T-cell (primary cell): ENCODE measurements at regions of chr2 and their contacts with region 1.

Region 1: GRCh38 chr2:177392373-177393202 is at the start of gene AGPS:
- DNase-seq: peak; percentile 45 to 82 (median 65)
- ATAC-seq: peak; percentile 93 to 97 (median 94)
- H3K4me3 ChIP-seq: peak within 1 kb of the TSS; percentile 59 to 94
- H3K4me3 Mint-ChIP-seq: peak within 1 kb of the TSS; percentile 84 to 94 (median 91)
- H3K27ac ChIP-seq: peak within 1 kb of the TSS; percentile 40
- H3K27ac Mint-ChIP-seq: peak within 1 kb of the TSS; percentile 56 to 87
- H3K4me1 ChIP-seq: peaks cover 15 to 18% of the 10 kb centered on the region in 2 experiments
- H3K4me1 Mint-ChIP-seq: peaks cover 52 to 68% (median 64%) of the 10 kb centered on the region in 3 donors
- H3K27me3 ChIP-seq: no peaks in the 10 kb centered on the region
- H3K27me3 Mint-ChIP-seq: no peaks in the 10 kb centered on the region
- total RNA-seq, gene AGPS: 26.1 to 32.3 (median 29.6) TPM

Region 2: DNA sequence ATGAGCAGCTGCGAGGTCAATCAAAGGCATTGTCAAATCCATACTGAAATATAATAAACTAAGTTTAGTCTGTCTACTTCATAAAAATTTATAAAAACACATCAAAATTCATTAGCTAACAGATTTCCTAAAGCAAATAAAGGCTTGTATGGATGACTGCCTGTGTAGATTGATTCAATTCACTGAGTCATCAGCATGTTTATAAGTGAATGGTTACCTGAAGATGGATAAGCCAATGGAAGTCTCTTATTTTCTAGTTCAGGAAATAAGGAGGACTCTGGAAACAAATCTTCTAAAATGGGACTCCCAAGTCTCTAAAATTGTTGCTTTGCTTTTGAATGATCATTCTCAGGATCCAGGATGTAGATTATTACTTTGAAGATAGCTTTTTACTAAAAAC is 237.0 kb before region 1 on chr2:
- CTCF ChIA-PET with region 1: no interaction called
- POLR2A ChIA-PET with region 1: interaction called in 1 of 2 experiments, 13 read pairs
- DNase-seq: no peak
- ATAC-seq: no peak
- H3K4me3 ChIP-seq: no peak overlapping the region
- H3K4me3 Mint-ChIP-seq: no peak overlapping the region
- H3K27ac ChIP-seq: no peak overlapping the region
- H3K27ac Mint-ChIP-seq: no peak overlapping the region
- H3K4me1 ChIP-seq: no peaks in the 10 kb centered on the region
- H3K4me1 Mint-ChIP-seq: peaks cover 6 to 8% (median 7%) of the 10 kb centered on the region in 3 donors
- H3K27me3 ChIP-seq: no peaks in the 10 kb centered on the region
- H3K27me3 Mint-ChIP-seq: peaks cover under 1 to 10% of the 10 kb centered on the region in 2 donors

Region 3: DNA sequence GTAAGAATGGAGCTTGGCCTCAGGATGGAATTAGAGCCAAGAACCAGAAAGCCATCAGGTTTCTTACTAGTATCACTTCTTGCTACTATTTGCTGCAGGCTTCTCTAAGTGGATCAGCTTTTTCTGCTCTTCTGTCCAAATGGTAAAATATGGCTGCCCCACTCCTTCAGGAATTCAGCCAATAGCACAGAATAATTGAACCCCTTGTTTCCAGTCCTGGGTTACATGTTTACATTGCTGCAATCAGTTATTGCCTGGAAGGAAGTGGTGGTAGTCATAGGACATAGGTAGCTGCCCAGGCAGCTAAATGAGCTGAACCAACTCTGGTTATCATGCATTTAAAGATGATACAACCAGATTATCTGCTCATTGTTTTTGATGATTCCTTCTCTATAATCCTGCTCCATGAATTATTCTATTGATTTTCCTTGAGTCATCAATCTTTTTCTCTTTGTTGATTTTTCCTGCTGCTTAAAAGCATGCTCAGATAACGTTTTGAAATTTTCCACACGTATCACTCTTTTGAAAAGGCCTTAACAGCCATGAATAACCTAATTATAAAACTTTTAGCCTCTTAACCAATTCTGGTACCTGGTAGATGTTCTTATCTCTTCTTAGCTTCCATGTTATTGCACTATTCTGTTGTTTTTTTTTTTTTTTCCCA is 12.6 kb after region 1 on chr2:
- CTCF ChIA-PET with region 1: interaction called in 1 of 2 experiments, 5 read pairs
- POLR2A ChIA-PET with region 1: interaction called in 1 of 2 experiments, 10 read pairs
- DNase-seq: no peak
- ATAC-seq: no peak
- H3K4me3 ChIP-seq: no peak overlapping the region
- H3K4me3 Mint-ChIP-seq: no peak overlapping the region
- H3K27ac ChIP-seq: no peak overlapping the region
- H3K27ac Mint-ChIP-seq: no peak overlapping the region
- H3K4me1 ChIP-seq: no peaks in the 10 kb centered on the region
- H3K4me1 Mint-ChIP-seq: peaks cover 65 to 67% (median 66%) of the 10 kb centered on the region in 3 donors
- H3K27me3 ChIP-seq: no peaks in the 10 kb centered on the region
- H3K27me3 Mint-ChIP-seq: no peaks in the 10 kb centered on the region

Region 4: DNA sequence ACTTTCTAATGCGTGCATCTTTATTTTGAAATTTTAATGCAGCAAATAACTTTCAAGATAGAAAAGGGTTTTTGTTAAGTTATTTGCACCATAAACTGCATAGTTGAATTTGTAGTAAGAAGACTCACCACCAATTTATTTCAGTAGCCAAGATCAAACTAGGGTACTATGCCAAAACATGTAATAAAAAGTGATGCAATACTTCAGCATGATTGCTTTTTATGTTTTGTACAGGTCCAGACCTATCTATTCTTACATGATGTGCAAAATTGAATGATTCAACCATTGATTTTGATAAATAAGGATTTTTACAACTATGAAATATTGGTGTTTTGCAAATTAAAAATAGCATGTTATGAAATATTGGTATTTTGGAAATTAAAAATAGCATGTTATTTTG is 26.7 kb after region 1 on chr2:
- CTCF ChIA-PET with region 1: interaction called, 6 to 12 read pairs
- POLR2A ChIA-PET with region 1: interaction called, 3 to 7 read pairs
- DNase-seq: no peak
- ATAC-seq: no peak
- H3K4me3 ChIP-seq: no peak overlapping the region
- H3K4me3 Mint-ChIP-seq: no peak overlapping the region
- H3K27ac ChIP-seq: no peak overlapping the region
- H3K27ac Mint-ChIP-seq: no peak overlapping the region
- H3K4me1 ChIP-seq: no peaks in the 10 kb centered on the region
- H3K4me1 Mint-ChIP-seq: peaks cover 19 to 31% (median 29%) of the 10 kb centered on the region in 3 donors
- H3K27me3 ChIP-seq: no peaks in the 10 kb centered on the region
- H3K27me3 Mint-ChIP-seq: no peaks in the 10 kb centered on the region

Region 5: GRCh38 chr2:177641331-177641730 is 248.7 kb after region 1 on chr2:
- CTCF ChIA-PET with region 1: no interaction called
- POLR2A ChIA-PET with region 1: no interaction called
- DNase-seq: no peak
- ATAC-seq: no peak
- H3K4me3 ChIP-seq: no peak overlapping the region
- H3K4me3 Mint-ChIP-seq: no peak overlapping the region
- H3K27ac ChIP-seq: no peak overlapping the region
- H3K27ac Mint-ChIP-seq: no peak overlapping the region
- H3K4me1 ChIP-seq: no peaks in the 10 kb centered on the region
- H3K4me1 Mint-ChIP-seq: no peaks in the 10 kb centered on the region
- H3K27me3 ChIP-seq: peaks cover 0 to 4% of the 10 kb centered on the region in 2 experiments
- H3K27me3 Mint-ChIP-seq: peaks cover 17 to 20% of the 10 kb centered on the region in 2 donors